AG04449 (cell line): ENCODE measurements at regions of chr15 and their contacts with region 1.

Region 1: DNA sequence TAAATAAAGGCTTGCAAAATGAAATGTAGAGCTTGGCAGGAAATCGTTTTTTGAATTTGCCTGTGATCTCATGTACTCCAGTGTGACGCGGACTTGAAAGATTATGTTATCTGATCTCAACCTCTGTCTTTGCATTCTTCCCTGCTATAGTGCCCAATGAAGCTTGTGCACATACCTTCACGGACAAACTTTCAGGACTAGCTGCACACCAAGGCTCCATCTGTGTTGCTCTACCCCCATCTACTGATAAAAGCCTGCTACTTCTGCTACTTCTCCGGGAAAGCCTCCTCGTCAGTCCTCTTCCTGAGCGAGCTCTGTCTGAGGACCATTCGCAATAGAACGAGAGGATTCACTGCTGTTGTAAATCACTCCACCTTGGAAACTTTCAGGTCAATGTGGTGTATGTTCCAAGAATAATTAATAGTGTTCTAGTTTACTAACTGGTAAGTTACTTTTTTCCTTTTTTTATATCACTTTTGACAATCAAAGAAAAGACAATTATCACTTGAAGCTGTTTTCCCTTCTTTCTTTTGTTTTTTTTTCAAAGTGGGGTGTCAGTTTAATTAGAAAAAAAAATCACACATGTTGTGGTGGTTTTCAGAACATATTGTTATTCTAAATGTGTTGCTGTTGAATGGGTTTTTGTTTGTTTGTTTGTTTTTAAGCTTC is 217.6 kb downstream of the ARRDC4 start:
- DNase-seq: peak; percentile 33
- H3K4me3 ChIP-seq: no peak overlapping the region
- CTCF ChIP-seq: peak; percentile 85

Region 2: GRCh38 chr15:97903971-97904572 is 274.0 kb before region 1 on chr15:
- CTCF ChIA-PET with region 1: interaction called, 322 read pairs
- POLR2A ChIA-PET with region 1: interaction called, 5 read pairs
- DNase-seq: no peak
- H3K4me3 ChIP-seq: no peak overlapping the region
- CTCF ChIP-seq: peak; percentile 91

Region 3: DNA sequence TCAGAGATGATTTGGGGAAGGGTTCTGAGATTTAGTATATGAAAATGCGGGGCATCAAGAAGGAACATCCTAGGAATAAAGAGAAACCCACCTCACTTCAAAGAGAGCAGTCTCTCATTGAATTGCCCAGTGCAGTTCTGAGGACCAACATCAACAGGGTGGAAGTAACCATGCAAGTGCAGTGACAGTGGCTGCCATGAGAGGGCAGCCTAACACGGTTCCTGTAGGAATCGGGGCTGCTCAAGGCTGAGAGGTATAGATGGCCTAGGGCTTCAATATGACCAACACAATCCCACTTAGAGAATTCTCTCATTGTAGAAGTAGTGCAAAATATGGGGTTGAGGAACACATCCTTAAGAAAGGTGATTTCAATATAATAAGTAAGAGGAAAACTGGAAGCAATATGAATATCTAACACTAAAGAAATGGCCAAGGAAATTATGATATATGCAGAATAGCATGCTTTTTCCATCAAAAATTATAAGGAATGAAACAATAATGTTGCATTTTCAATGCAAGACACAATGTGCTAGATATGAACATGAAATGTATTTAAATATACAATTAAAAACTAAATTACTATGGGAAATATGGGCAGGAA is 268.7 kb before region 1 on chr15:
- CTCF ChIA-PET with region 1: interaction called, 322 read pairs
- POLR2A ChIA-PET with region 1: no interaction called
- DNase-seq: no peak
- H3K4me3 ChIP-seq: no peak overlapping the region
- CTCF ChIP-seq: peak; percentile 89

Region 4: GRCh38 chr15:98085003-98085639 is 92.9 kb before region 1 on chr15:
- CTCF ChIA-PET with region 1: interaction called, 13 read pairs
- POLR2A ChIA-PET with region 1: no interaction called
- DNase-seq: no peak
- H3K4me3 ChIP-seq: no peak overlapping the region
- CTCF ChIP-seq: peak; percentile 43

Region 5: GRCh38 chr15:98120561-98120960 is 57.5 kb before region 1 on chr15:
- CTCF ChIA-PET with region 1: no interaction called
- POLR2A ChIA-PET with region 1: no interaction called
- DNase-seq: no peak
- H3K4me3 ChIP-seq: no peak overlapping the region
- CTCF ChIP-seq: no peak

Region 6: DNA sequence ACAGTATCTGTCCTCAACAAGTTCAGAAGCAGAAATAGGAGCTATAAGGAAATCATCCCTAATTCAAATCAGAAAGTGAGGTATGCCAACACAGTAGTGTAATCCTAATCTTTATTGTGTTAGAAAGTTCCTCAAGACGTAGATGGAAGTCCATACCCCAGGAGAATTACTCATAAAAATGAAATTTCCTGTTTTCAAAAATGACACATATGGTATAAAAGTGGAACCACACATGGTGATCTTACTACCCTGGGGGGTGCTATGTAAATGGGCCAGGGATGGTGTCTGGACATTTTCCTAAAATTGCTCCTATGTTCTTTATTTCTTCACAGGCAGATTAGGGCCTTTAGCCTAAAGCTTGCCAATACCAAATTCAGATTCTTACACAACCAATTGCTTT is 13.5 kb before region 1 on chr15:
- CTCF ChIA-PET with region 1: interaction called, 32 read pairs
- POLR2A ChIA-PET with region 1: no interaction called
- DNase-seq: no peak
- H3K4me3 ChIP-seq: no peak overlapping the region
- CTCF ChIP-seq: no peak

Region 7: GRCh38 chr15:98195796-98196195 is 17.7 kb after region 1 on chr15:
- CTCF ChIA-PET with region 1: interaction called, 13 read pairs
- POLR2A ChIA-PET with region 1: no interaction called
- DNase-seq: no peak
- H3K4me3 ChIP-seq: no peak overlapping the region
- CTCF ChIP-seq: no peak

Region 8: GRCh38 chr15:98382139-98382538 is 204.1 kb after region 1 on chr15:
- CTCF ChIA-PET with region 1: no interaction called
- POLR2A ChIA-PET with region 1: no interaction called
- DNase-seq: no peak
- H3K4me3 ChIP-seq: no peak overlapping the region
- CTCF ChIP-seq: no peak